IMR-90 (cell line): ENCODE measurements at regions of chr2 and their contacts with region 1.

Region 1: DNA sequence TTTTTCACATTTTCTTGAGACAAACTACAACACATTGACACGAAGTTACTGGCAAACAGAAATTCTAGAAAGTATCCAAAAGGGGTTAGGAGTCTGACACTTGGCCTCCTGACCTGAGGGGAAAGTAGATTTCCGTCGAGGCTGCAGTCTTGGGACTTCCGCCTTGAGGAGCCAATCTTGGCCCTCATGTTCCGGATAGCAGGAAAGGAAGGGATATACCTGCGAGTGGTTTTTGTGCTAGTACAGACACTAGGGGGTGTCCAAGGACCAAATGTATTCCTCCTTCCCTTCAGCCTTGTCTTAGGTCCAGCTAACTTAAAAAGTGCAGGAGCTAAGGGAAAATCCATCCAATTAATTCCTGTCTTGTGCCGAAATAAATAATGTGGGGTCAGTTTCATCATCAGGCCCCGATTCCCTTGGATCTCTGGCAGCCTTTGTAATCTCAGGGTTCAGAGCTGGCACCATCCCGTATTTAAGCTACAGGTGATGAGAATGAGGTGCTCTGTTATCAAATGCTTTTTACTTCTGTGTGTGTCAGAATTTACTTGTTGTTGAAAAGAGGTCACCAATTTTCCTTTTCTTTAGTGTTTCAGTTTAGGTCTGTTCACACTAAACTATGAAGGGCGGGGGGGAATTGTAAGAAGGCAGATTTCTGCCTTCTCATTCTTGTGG is 330.2 kb upstream of the FANCL start:
- DNase-seq: peak; percentile 69
- ATAC-seq: peak; percentile 96
- H3K4me3 ChIP-seq: no peak overlapping the region
- H3K27ac ChIP-seq: no peak overlapping the region
- H3K4me1 ChIP-seq: no peaks in the 10 kb centered on the region
- H3K27me3 ChIP-seq: no peaks in the 10 kb centered on the region
- CTCF ChIP-seq: peak; percentile 64
- POLR2A ChIP-seq: no peak
- RAD21 ChIP-seq: peak; percentile 68

Region 2: GRCh38 chr2:58680755-58681310 is 109.5 kb after region 1 on chr2:
- CTCF ChIA-PET with region 1: no interaction called
- POLR2A ChIA-PET with region 1: no interaction called
- dilution Hi-C with region 1: no loop called
- in situ Hi-C with region 1: no loop called
- intact Hi-C with region 1: loop called (anchors 2 kb)
- DNase-seq: no peak
- ATAC-seq: no peak
- H3K4me3 ChIP-seq: no peak overlapping the region
- H3K27ac ChIP-seq: no peak overlapping the region
- H3K4me1 ChIP-seq: no peaks in the 10 kb centered on the region
- H3K27me3 ChIP-seq: no peaks in the 10 kb centered on the region
- CTCF ChIP-seq: no peak
- POLR2A ChIP-seq: no peak
- RAD21 ChIP-seq: no peak